ENCODE measurements at regions of chr17 and their contacts with region 1.

Region 1: DNA sequence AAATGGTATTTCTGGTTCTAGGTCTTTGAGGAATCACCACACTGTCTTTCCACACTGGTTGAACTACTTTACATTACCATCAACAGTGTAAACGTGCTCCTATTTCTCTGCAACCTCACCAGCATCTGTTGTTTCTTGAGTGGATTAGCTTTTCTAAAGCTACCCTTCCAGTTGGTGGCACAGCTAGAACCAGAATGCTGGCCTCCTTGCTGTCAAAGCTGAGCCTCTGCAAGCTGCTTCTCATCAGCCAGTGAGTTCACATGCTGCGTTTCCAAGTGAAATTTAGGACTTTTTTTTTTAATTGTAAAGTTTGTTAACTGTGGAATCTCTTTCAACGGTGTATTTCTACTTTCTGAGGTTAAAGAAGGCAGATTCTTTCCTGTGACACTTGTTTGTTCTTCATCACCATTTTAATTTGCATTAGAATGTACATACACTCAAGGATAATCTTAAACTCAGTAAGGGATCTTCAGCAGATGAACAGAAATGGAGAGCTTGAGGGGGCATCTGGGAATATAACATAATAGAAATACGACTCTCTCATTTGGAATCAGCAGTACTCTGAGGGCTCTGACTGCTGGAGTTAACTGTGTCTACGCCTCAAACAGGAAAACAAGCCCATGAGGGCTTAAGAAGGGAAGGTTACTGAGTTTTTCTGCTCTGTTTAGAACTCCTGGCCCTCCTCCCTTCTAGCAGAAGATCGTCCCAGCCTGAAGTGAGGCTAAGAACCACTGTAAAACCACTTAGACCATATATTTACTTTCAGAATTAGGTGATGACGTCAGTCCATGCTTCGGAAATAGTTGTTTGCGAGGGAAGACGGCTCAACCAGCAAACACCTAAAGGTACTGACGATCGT is 148.4 kb upstream of the FAM20A start:
- DNase-seq: no peak
- ATAC-seq: peak; percentile 86
- H3K4me3 Mint-ChIP-seq: peak overlapping the region; percentile 6
- H3K27ac Mint-ChIP-seq: peak overlapping the region; percentile 86
- H3K4me1 Mint-ChIP-seq: peaks cover 31% of the 10 kb centered on the region
- H3K27me3 Mint-ChIP-seq: peaks cover under 1% of the 10 kb centered on the region; the same call in 1 of the 2 replicates
- CTCF ChIP-seq: no peak

Region 2: GRCh38 chr17:68733241-68734176 is 16.1 kb before region 1 on chr17:
- CTCF ChIA-PET with region 1: no interaction called
- POLR2A ChIA-PET with region 1: interaction called, 12 read pairs
- DNase-seq: no peak
- ATAC-seq: peak; percentile 54
- H3K4me3 Mint-ChIP-seq: no peak overlapping the region
- H3K27ac Mint-ChIP-seq: peak overlapping the region; percentile 47
- H3K4me1 Mint-ChIP-seq: peaks cover 46% of the 10 kb centered on the region
- H3K27me3 Mint-ChIP-seq: no peaks in the 10 kb centered on the region; the same call in none of the 2 replicates
- CTCF ChIP-seq: no peak

Region 3: DNA sequence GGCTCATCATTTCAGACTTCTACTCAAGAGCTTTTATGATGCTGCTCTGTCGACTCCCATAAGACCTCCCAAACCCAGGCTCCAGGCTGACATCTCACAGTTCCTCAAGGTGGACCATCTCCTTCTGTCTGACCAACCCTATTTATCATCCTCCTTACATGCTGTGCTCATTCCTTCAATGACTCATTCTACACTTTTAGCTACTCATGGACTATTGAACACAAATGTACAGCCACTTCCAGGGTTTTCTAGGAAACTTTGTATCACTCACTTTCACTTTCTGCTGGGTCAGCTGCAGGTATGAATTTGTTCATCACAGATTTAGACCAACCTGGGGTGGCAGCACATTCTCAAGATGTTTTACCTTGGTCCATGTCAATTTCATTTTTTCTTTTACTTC is 14.0 kb after region 1 on chr17:
- CTCF ChIA-PET with region 1: no interaction called
- POLR2A ChIA-PET with region 1: no interaction called
- DNase-seq: no peak
- ATAC-seq: no peak
- H3K4me3 Mint-ChIP-seq: no peak overlapping the region
- H3K27ac Mint-ChIP-seq: no peak overlapping the region
- H3K4me1 Mint-ChIP-seq: peaks cover 13% of the 10 kb centered on the region
- H3K27me3 Mint-ChIP-seq: no peaks in the 10 kb centered on the region
- CTCF ChIP-seq: no peak